HAP-1 (cell line): ENCODE measurements at regions of chr17 and their contacts with region 1.

Region 1: DNA sequence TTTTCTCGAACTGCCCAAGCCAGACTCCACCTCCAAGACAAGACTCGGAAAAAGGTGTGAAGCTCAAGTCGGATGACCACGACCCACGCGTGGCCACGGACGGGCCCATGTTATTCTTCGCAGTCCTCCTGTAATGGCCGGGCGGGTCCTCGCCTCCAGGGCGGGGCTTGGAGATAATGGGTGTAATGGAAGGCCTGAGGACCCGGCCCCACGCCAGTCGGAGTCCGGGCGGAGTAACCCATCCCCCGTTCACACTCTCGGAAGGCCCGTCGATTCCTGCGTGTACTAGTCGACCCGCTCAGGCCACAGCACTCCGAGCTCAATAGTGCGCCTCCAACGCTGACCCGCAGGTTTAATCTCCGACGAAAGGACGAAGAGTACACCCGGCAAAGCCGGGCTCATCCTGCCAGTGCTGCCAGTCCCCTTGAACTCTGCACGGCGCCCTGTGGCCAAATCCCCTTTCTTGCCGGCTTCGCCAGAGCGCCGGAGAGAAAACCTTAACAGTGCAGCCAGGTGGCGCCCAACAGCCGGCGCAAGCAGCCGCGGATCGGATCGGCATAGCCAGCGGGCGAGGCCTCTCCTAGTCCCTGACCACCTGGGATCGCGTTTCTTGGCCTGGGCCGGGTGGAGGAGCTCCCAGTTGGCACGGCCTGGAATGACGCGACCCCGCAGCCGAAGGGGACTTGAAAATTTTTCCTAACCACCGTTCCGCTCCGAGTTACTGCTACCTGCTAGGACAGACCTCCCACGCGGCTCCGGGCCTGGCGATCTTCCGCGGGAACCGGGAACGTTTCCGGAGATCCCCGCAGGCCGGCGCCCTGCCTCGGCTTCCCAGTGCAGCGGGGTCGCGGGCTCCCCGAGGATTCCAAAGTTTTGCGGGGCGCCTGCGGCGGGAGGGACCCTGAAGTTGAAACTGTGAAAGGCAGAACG is 762.0 kb downstream of the KCNJ18 start:
- DNase-seq: no peak
- H3K4me3 ChIP-seq: no peak overlapping the region
- H3K4me1 ChIP-seq: no peaks in the 10 kb centered on the region
- H3K27me3 ChIP-seq: no peaks in the 10 kb centered on the region

Region 2: DNA sequence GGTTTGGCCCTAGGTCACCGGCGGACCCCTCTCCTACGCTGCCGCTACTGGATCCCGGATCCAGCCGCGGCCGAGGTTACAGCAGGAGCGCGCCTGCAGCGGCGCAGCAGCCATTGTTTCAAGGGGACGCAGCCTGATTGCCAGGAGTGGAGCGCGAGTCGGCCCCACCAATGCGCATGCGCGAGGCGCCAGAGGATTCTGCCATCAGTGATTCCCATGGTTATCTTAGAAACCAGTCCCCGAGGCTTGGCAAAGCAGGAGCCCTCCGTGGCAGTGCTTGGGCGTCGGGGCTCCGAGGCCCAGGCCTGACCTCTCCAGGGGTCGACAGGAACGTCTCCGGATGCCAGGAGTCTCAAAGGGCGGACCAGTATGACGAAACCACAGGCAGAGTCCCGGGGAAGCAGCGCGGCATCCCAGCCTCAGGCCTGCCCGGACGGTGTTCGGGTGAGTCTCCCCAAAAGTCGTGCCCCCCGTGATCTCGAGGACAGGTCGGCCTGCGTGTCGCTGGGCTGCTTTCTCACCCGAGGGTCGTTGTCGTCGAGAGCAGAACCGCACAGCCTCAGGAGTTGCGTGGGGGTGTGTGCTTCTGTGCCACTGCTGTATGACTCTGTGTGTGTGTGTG is 153.5 kb before region 1 on chr17:
- in situ Hi-C with region 1: no loop called
- DNase-seq: no peak
- H3K4me3 ChIP-seq: no peak overlapping the region
- H3K4me1 ChIP-seq: no peaks in the 10 kb centered on the region
- H3K27me3 ChIP-seq: no peaks in the 10 kb centered on the region

Region 3: DNA sequence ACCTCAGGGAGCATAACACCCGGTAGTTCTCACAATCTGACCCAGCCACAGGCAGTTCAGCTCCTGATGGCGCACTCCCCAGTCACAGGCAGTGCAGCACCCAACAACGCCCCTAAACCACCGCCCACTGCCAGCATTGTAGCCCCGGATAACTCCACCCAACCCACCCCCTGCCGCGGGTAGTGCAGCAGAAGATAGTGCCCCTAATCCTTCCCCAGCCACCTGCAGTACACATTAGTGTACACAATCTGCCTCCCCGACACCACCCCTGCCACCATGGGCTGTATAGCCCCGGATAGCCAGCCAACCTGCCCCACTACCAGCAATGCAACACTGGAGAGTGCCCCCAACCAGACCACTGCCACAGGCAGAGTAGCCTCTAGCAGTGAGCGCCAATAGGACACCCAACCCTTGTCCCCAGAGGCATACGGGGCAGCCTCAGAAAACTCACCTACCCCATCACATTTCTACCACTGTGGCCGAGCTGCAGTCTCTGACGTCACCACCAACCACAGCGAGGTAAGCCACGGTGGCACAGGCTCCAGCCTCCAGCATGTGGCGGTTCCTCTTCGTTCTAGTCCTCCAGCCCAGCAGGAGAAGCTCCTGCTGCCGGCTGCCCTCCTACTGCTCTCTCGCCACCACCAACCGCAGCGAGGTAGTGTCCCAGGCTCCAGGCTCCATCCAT is 115.3 kb after region 1 on chr17:
- in situ Hi-C with region 1: loop called (anchors 25 kb)
- DNase-seq: no peak
- H3K4me3 ChIP-seq: no peak overlapping the region
- H3K4me1 ChIP-seq: no peaks in the 10 kb centered on the region
- H3K27me3 ChIP-seq: no peaks in the 10 kb centered on the region

Region 4: GRCh38 chr17:22654447-22654846 is 200.1 kb after region 1 on chr17:
- in situ Hi-C with region 1: no loop called
- DNase-seq: no peak
- H3K4me3 ChIP-seq: no peak overlapping the region
- H3K4me1 ChIP-seq: no peaks in the 10 kb centered on the region
- H3K27me3 ChIP-seq: no peaks in the 10 kb centered on the region